IMR-90 (cell line): ENCODE measurements at regions of chr5 and their contacts with region 1.

Region 1: DNA sequence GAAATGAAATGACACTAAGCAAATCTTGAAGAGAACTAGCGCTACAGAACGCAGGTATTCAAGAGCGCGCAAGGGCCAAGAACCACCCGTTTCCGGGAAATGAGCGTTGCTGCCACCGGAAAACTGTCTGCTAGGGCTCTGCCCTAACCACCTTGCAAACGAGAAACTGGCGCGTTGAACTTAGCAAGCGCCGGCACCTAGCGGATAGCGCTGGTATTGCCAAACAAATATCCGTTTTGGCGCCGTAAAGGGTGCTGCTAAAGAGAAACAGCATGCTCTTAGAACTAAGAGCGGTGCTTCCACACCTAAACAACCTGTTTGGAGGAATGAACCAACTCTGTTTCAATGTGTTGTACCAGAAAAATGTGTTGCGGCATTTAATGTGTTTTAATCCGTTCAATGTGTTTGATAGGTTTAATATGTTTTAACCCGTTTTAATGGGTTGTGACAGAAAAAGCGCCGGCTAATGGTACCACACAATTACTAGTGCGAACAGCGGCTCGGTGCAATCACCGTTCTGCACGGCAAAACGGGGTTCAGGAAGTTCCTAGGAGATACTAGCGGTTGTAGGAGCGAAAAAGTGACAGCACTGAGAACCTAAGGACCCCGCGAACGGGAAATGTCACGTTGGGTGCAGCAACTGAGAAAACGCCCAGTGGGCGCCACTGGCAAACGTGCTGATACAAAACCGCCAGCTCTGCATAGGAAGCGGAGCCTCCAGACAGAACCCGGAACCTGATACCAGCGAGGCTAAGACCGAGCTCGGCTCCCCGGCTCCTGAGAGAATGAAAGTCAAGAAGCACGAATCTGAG is at the start of gene ANXA2R:
- DNase-seq: peak; percentile 97
- ATAC-seq: peak; percentile 52
- H3K4me3 ChIP-seq: peak within 1 kb of the TSS; percentile 95
- H3K27ac ChIP-seq: peak within 1 kb of the TSS; percentile 88
- H3K4me1 ChIP-seq: peaks cover 6% of the 10 kb centered on the region
- H3K27me3 ChIP-seq: no peaks in the 10 kb centered on the region
- CTCF ChIP-seq: peak; percentile 84
- POLR2A ChIP-seq: no peak
- RAD21 ChIP-seq: peak; percentile 76
- total RNA-seq, gene ANXA2R: 1.3 and 1.4 TPM in 2 replicates

Region 2: GRCh38 chr5:41903892-41904799 is 1136.3 kb before region 1 on chr5 and contains the start of gene RIMOC1:
- CTCF ChIA-PET with region 1: no interaction called
- POLR2A ChIA-PET with region 1: no interaction called
- dilution Hi-C with region 1: no loop called
- in situ Hi-C with region 1: no loop called
- intact Hi-C with region 1: loop called (anchors 5 kb)
- DNase-seq: peak; percentile 100
- ATAC-seq: peak; percentile 99
- H3K4me3 ChIP-seq: peak within 1 kb of the TSS; percentile 87
- H3K27ac ChIP-seq: peak within 1 kb of the TSS; percentile 90
- H3K4me1 ChIP-seq: no peaks in the 10 kb centered on the region; the same call in 1 of the 2 replicates
- H3K27me3 ChIP-seq: no peaks in the 10 kb centered on the region
- CTCF ChIP-seq: no peak
- POLR2A ChIP-seq: peak; percentile 97
- RAD21 ChIP-seq: no peak
- total RNA-seq, gene RIMOC1: 4.1 and 10.3 TPM in 2 replicates

Region 3: DNA sequence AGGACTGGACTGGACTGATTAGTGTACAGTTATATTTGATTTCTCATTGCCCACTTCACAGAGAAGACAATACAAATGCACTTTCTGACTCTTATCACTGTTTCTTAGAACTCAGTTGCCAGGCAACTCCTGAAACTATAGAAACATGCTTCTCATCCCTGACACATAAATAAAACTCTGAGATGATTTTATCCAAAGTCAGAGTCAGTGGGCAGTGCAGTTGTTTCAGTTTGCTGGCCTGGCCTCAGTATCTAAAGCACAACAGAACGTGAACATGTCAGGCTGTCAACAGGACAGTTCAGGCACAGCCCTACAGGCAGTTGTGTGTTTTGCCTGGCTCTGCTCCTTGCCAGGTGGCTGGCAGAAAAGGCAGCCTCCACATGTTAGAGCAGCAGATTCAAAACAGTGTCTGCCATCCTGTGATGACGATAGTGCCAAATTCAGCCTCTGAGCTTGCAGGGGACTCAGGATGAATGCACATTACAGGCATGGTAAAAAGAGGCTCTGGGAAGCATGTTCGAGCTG is 349.0 kb before region 1 on chr5:
- CTCF ChIA-PET with region 1: no interaction called
- POLR2A ChIA-PET with region 1: no interaction called
- dilution Hi-C with region 1: no loop called
- in situ Hi-C with region 1: no loop called
- intact Hi-C with region 1: no loop called
- DNase-seq: peak; percentile 11
- ATAC-seq: no peak
- H3K4me3 ChIP-seq: no peak overlapping the region
- H3K27ac ChIP-seq: peak overlapping the region; percentile 52; the same call in 1 of the 2 replicates
- H3K4me1 ChIP-seq: peaks cover 2% of the 10 kb centered on the region; the same call in 1 of the 2 replicates
- H3K27me3 ChIP-seq: no peaks in the 10 kb centered on the region
- CTCF ChIP-seq: no peak
- POLR2A ChIP-seq: no peak
- RAD21 ChIP-seq: no peak

Region 4: DNA sequence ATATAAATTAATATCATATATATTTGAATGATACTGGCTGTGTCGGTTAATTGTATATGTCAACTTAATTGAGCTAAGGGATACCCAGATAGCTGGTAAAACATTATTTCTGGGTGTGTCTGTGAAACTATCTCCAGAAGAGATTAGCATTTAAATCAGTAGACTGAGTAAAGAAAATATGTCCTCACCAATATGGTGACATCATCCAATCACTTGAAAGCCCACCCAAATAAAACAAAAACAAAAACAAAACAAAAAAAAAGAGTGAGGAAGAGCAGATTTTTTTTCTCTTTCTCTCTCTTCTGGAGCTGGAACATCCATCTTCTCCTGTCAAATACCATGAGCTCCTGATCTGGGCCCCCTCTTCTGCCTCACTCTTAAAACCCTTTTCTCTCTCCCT is 299.6 kb before region 1 on chr5:
- CTCF ChIA-PET with region 1: no interaction called
- POLR2A ChIA-PET with region 1: no interaction called
- dilution Hi-C with region 1: no loop called
- in situ Hi-C with region 1: no loop called
- intact Hi-C with region 1: no loop called
- DNase-seq: no peak
- ATAC-seq: no peak
- H3K4me3 ChIP-seq: no peak overlapping the region
- H3K27ac ChIP-seq: no peak overlapping the region
- H3K4me1 ChIP-seq: no peaks in the 10 kb centered on the region
- H3K27me3 ChIP-seq: no peaks in the 10 kb centered on the region
- CTCF ChIP-seq: no peak
- POLR2A ChIP-seq: no peak
- RAD21 ChIP-seq: no peak

Region 5: GRCh38 chr5:42908509-42909488 is 131.7 kb before region 1 on chr5:
- CTCF ChIA-PET with region 1: interaction called, 14 read pairs
- POLR2A ChIA-PET with region 1: interaction called, 5 read pairs
- dilution Hi-C with region 1: no loop called
- in situ Hi-C with region 1: no loop called
- intact Hi-C with region 1: loop called (anchors 1 kb)
- DNase-seq: peak; percentile 85
- ATAC-seq: peak; percentile 96
- H3K4me3 ChIP-seq: peak overlapping the region; percentile 50
- H3K27ac ChIP-seq: no peak overlapping the region
- H3K4me1 ChIP-seq: no peaks in the 10 kb centered on the region
- H3K27me3 ChIP-seq: peaks cover 13% of the 10 kb centered on the region
- CTCF ChIP-seq: peak; percentile 83
- POLR2A ChIP-seq: no peak
- RAD21 ChIP-seq: peak; percentile 78

Region 6: GRCh38 chr5:42950440-42951292 is 89.8 kb before region 1 on chr5:
- CTCF ChIA-PET with region 1: interaction called, 4 read pairs
- POLR2A ChIA-PET with region 1: interaction called, 6 read pairs
- dilution Hi-C with region 1: no loop called
- in situ Hi-C with region 1: no loop called
- intact Hi-C with region 1: loop called (anchors 1 kb)
- DNase-seq: peak; percentile 100
- ATAC-seq: peak; percentile 78
- H3K4me3 ChIP-seq: peak overlapping the region; percentile 45
- H3K27ac ChIP-seq: peak overlapping the region; percentile 90
- H3K4me1 ChIP-seq: peaks cover 4% of the 10 kb centered on the region
- H3K27me3 ChIP-seq: no peaks in the 10 kb centered on the region
- CTCF ChIP-seq: no peak; the same call in 1 of the 2 replicates
- POLR2A ChIP-seq: peak; percentile 83
- RAD21 ChIP-seq: no peak

Region 7: GRCh38 chr5:43019614-43020293 is 20.7 kb before region 1 on chr5:
- CTCF ChIA-PET with region 1: interaction called, 20 read pairs
- POLR2A ChIA-PET with region 1: interaction called, 3 read pairs
- dilution Hi-C with region 1: no loop called
- in situ Hi-C with region 1: no loop called
- intact Hi-C with region 1: loop called (anchors 2 kb)
- DNase-seq: peak; percentile 91
- ATAC-seq: peak; percentile 50
- H3K4me3 ChIP-seq: peak overlapping the region; percentile 64
- H3K27ac ChIP-seq: peak overlapping the region; percentile 96
- H3K4me1 ChIP-seq: peaks cover 8% of the 10 kb centered on the region
- H3K27me3 ChIP-seq: no peaks in the 10 kb centered on the region
- CTCF ChIP-seq: peak; percentile 49
- POLR2A ChIP-seq: no peak
- RAD21 ChIP-seq: 0 out of 2 replicates have a peak, but pooled peaks have one; percentile 29

Region 8: GRCh38 chr5:43066799-43067741 is 26.6 kb after region 1 on chr5:
- CTCF ChIA-PET with region 1: interaction called, 4 read pairs
- POLR2A ChIA-PET with region 1: interaction called, 4 read pairs
- dilution Hi-C with region 1: no loop called
- in situ Hi-C with region 1: no loop called
- intact Hi-C with region 1: loop called (anchors 1 kb)
- DNase-seq: peak; percentile 91
- ATAC-seq: peak; percentile 56
- H3K4me3 ChIP-seq: peak overlapping the region; percentile 69
- H3K27ac ChIP-seq: peak overlapping the region; percentile 88
- H3K4me1 ChIP-seq: peaks cover 4% of the 10 kb centered on the region
- H3K27me3 ChIP-seq: no peaks in the 10 kb centered on the region
- CTCF ChIP-seq: no peak
- POLR2A ChIP-seq: peak; percentile 89
- RAD21 ChIP-seq: no peak

Region 9: GRCh38 chr5:43530648-43531047 is 490.2 kb after region 1 on chr5:
- CTCF ChIA-PET with region 1: no interaction called
- POLR2A ChIA-PET with region 1: no interaction called
- dilution Hi-C with region 1: no loop called
- in situ Hi-C with region 1: no loop called
- intact Hi-C with region 1: no loop called
- DNase-seq: no peak
- ATAC-seq: no peak
- H3K4me3 ChIP-seq: no peak overlapping the region
- H3K27ac ChIP-seq: no peak overlapping the region
- H3K4me1 ChIP-seq: no peaks in the 10 kb centered on the region
- H3K27me3 ChIP-seq: no peaks in the 10 kb centered on the region
- CTCF ChIP-seq: no peak
- POLR2A ChIP-seq: no peak
- RAD21 ChIP-seq: no peak